PC-9 (cell line): ENCODE measurements at regions of chr9 and their contacts with region 1.

Region 1: DNA sequence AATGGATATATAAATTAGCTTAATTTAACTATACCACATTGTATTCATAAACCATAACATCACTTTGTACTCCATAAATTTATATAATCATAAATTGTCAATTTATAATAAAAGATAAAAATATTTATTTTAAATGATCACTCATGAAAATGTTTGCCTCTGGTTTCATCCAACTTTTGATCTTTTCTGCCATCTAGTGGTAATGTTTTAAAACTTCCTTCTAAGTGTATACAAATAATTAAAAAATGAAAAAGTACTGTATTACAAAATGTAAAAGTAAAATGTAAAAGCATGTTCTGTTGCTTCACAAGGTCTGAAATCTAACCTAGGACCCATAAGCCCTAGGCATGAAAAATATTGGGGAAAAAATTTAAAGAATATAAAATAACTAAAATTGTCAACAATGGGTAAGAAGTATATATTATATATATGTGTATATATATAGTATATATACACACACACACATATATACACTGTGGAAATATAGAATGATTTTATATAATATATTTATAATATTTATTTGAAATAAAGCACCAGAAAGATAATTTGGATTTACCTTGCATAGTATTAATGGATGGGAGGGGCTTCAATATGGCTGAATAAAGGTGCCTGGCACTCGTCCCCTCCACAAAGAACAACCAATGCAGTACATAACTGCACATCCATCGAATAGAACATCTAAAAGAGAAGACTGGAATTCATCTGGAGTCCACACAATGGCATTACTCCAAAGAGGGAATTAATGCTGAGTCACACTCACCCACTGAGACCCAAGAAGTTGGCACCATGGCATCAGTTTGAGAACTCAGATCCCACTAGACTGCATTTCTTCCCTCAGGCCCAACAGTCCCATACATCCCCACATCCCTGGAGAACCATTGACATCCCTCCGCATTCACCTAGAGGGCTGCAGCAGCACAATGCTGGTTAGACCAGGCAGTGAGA is 32.5 kb downstream of the ANXA1 start:
- DNase-seq: peak in 1 of 2 experiments; percentile 52
- H3K4me3 ChIP-seq: no peak overlapping the region
- H3K27ac ChIP-seq: no peak overlapping the region
- H3K4me1 ChIP-seq: peaks cover 23% of the 10 kb centered on the region
- H3K27me3 ChIP-seq: no peaks in the 10 kb centered on the region
- CTCF ChIP-seq: peak; percentile 80

Region 2: DNA sequence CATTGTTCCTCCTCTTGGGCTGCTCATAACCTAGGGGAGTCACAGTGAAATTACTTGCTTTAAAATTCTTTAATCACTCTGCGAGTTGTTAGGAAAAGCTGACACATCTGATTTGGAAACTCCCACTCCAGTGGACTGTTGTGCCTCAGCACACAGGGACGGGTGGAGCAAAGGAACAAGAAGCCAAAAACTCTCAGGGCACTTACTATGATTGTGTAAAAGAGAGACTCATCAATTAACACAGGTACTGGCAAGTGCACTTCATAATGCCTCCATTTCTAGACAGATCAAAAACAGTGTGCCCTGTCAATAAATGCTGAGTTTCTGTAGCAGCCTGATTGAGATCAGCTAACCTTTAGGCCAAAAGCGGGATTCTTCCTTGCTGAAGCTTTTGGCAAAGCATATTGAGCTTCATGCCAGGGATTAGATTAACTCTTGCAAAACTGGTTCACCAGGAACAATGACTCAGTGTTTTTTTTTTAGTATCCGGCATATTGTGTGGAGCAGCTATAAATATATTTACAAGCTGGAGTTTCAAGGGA is 606.9 kb before region 1 on chr9:
- CTCF ChIA-PET with region 1: no interaction called
- POLR2A ChIA-PET with region 1: no interaction called
- intact Hi-C with region 1: loop called (anchors 5 kb)
- DNase-seq: peak; percentile 59 to 95
- H3K4me3 ChIP-seq: peak overlapping the region; percentile 43; the same call in 1 of the 2 replicates
- H3K27ac ChIP-seq: peak overlapping the region; percentile 95
- H3K4me1 ChIP-seq: peaks cover 89% of the 10 kb centered on the region
- H3K27me3 ChIP-seq: no peaks in the 10 kb centered on the region
- CTCF ChIP-seq: no peak

Region 3: DNA sequence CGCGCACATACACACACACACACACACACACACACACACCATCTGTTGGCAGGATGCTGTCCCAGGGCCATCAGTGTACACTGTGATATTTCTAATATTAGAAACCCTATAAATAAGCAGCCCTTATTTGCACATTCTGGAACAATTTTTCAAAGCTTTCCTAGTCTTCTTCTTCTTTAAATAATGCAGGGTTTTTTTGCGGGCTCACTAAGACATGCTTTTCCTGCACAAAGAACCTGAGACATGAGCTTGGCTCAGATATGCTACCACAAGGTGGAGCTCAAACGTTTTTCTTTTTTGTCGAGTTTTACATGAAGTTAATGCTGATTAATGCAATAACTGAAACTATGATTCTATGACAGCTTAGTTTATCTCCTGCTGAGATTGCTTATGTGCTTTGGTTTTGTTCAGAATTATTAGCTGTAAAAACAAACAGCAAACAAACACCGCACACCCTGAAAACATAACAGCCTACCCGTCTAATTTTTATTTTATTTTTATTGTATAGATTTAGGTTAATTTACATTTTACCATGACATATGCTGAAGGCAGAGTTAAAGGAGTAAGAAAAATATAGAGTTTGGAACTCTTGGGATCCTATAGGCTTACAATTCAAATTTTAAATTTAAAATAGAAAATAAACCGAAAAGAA is 327.1 kb before region 1 on chr9:
- CTCF ChIA-PET with region 1: no interaction called
- POLR2A ChIA-PET with region 1: interaction called, 5 read pairs
- intact Hi-C with region 1: loop called (anchors 1 kb)
- DNase-seq: peak; percentile 42 to 58
- H3K4me3 ChIP-seq: no peak overlapping the region
- H3K27ac ChIP-seq: peak overlapping the region; percentile 80
- H3K4me1 ChIP-seq: peaks cover 16% of the 10 kb centered on the region
- H3K27me3 ChIP-seq: no peaks in the 10 kb centered on the region
- CTCF ChIP-seq: peak; percentile 77

Region 4: GRCh38 chr9:73023025-73023541 is 161.1 kb before region 1 on chr9:
- CTCF ChIA-PET with region 1: no interaction called
- POLR2A ChIA-PET with region 1: interaction called, 3 read pairs
- intact Hi-C with region 1: loop called (anchors 1 kb)
- DNase-seq: peak; percentile 39 to 48
- H3K4me3 ChIP-seq: no peak overlapping the region
- H3K27ac ChIP-seq: no peak overlapping the region
- H3K4me1 ChIP-seq: no peaks in the 10 kb centered on the region
- H3K27me3 ChIP-seq: no peaks in the 10 kb centered on the region
- CTCF ChIP-seq: peak; percentile 64

Region 5: GRCh38 chr9:73104342-73104741 is 79.8 kb before region 1 on chr9:
- CTCF ChIA-PET with region 1: no interaction called
- POLR2A ChIA-PET with region 1: interaction called, 3 read pairs
- intact Hi-C with region 1: loop called (anchors 1 kb)
- DNase-seq: no peak
- H3K4me3 ChIP-seq: no peak overlapping the region
- H3K27ac ChIP-seq: no peak overlapping the region
- H3K4me1 ChIP-seq: no peaks in the 10 kb centered on the region
- H3K27me3 ChIP-seq: no peaks in the 10 kb centered on the region
- CTCF ChIP-seq: no peak

Region 6: GRCh38 chr9:73162987-73163768 is 21.0 kb before region 1 on chr9:
- CTCF ChIA-PET with region 1: no interaction called
- POLR2A ChIA-PET with region 1: interaction called, 10 read pairs
- intact Hi-C with region 1: no loop called
- DNase-seq: no peak
- H3K4me3 ChIP-seq: no peak overlapping the region
- H3K27ac ChIP-seq: no peak overlapping the region
- H3K4me1 ChIP-seq: no peaks in the 10 kb centered on the region
- H3K27me3 ChIP-seq: no peaks in the 10 kb centered on the region
- CTCF ChIP-seq: no peak

Region 7: DNA sequence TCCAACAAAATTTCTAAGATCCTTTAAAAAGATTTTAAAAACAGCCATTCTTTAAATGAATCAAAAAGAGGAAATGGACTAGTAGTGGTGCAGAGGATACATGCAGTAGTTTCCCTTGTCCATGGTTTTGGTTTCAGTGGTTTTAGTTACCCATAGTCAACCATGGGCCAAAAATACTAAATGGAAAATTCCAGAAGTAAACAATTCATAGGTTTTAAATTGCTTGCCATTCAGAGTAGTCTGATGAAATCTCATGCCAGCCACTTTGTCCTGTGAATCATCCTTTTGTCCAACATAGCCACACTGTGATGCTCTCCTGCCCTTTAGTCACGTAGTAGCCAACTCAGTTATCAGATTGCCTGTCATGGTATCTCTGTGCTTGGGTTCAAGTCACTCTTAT is 253.6 kb after region 1 on chr9:
- CTCF ChIA-PET with region 1: no interaction called
- POLR2A ChIA-PET with region 1: no interaction called
- intact Hi-C with region 1: no loop called
- DNase-seq: no peak
- H3K4me3 ChIP-seq: no peak overlapping the region
- H3K27ac ChIP-seq: no peak overlapping the region
- H3K4me1 ChIP-seq: no peaks in the 10 kb centered on the region
- H3K27me3 ChIP-seq: no peaks in the 10 kb centered on the region
- CTCF ChIP-seq: no peak